ENCODE measurements at regions of chr12 and their contacts with region 1.

Region 1: GRCh38 chr12:120228291-120229070 is 27.6 kb upstream of the RPLP0 start:
- DNase-seq: peak; percentile 75
- H3K27ac ChIP-seq: peak overlapping the region; percentile 100
- CTCF ChIP-seq: peak; percentile 95

Region 2: DNA sequence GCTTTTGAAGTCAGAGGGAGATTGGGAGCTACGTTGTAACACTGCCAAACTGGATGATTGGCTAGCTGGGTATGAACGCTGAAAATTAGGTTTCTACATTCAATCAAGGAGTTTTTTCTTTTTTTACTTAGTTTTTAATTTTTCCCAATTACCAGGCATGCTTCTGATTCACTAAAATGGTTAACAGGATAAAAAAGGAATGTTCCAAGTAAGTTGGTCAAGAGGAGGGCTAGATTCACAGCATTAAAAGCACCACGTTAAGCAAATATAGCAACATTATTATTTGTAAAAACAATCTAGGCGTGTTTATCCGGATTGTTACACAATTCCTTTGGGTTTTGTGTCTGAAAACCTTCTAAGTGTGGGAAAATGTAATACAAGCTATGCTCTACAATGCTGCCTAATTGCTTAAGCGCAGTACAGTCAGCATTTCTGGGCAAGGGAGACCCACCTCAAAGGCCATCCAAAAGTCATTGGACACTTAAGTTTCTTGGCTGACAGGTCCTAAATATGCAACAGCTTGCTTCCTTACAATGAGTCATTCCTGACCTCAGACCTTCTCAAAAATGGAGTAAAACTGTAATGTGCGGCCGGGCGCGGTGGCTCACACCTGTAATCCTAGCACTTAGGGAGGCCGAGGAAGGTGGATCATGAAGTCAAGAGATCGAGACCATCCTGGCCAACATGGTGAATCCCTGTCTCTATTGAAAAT is 28.7 kb before region 1 on chr12:
- CTCF ChIA-PET with region 1: interaction called, 11 read pairs
- POLR2A ChIA-PET with region 1: interaction called, 19 read pairs
- DNase-seq: peak; percentile 35
- H3K27ac ChIP-seq: peak overlapping the region; percentile 91
- CTCF ChIP-seq: no peak

Region 3: GRCh38 chr12:120247621-120248030 is 19.1 kb after region 1 on chr12:
- CTCF ChIA-PET with region 1: interaction called, 13 read pairs
- POLR2A ChIA-PET with region 1: interaction called, 3 read pairs
- DNase-seq: no peak
- H3K27ac ChIP-seq: peak overlapping the region; percentile 91
- CTCF ChIP-seq: no peak

Region 4: DNA sequence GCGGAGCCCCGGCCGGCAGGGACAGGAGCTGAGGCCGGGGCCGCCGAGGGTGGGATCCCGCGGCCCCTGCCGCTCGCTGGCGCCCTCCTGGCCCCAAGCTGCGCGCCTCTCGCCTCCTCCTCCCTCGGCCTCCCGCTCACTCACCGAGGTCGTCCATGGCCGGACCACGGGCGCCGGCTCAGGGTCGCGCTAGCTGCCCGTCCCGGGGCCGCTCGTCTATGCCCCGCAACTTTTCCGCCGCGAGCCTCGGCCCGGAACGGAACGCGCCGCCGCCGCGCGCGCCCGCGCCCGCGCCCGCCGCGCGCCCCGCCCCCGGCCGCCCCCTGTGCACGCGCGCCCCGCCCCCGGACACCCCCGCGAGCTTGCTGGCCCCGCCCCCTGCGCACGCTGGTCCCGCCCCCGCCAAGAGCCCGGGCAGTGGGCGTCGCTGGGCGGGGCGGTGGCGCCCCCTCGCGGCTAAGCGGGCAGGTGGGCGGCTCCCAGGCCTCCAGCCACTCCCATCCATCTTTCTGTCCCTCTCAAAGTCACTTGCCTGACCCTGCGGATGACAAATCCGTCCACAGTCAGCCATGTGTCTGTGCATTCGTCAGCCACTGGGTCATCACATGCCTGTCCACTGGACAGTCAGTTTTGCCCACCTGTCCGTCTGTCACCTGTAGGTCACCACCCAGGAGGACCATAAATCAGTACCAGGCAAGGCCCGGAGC is 37.1 kb after region 1 on chr12 and contains the start of gene PXN:
- CTCF ChIA-PET with region 1: interaction called, 142 read pairs
- POLR2A ChIA-PET with region 1: interaction called, 64 read pairs
- DNase-seq: peak; percentile 90
- H3K27ac ChIP-seq: peak within 1 kb of the TSS; percentile 96
- CTCF ChIP-seq: peak; percentile 93

Region 5: GRCh38 chr12:120292661-120293531 is 64.4 kb after region 1 on chr12 and contains the start of gene RNU4-1:
- CTCF ChIA-PET with region 1: interaction called, 4 read pairs
- POLR2A ChIA-PET with region 1: interaction called, 14 read pairs
- DNase-seq: peak; percentile 65
- H3K27ac ChIP-seq: peak within 1 kb of the TSS; percentile 97
- CTCF ChIP-seq: no peak

Region 6: GRCh38 chr12:120469450-120470149 is 241.1 kb after region 1 on chr12 and contains the start of gene SRSF9:
- CTCF ChIA-PET with region 1: no interaction called
- POLR2A ChIA-PET with region 1: no interaction called
- DNase-seq: peak; percentile 98
- H3K27ac ChIP-seq: peak within 1 kb of the TSS; percentile 87
- CTCF ChIP-seq: peak; percentile 88